Activated CD8-positive, alpha-beta memory T cell treated with anti-CD3 and anti-CD28 coated beads, Interleukin-2, amount 10 ng/mL, durations not matched to agents 7 days and 5 days (primary cell): ENCODE measurements at regions of chr7 and their contacts with region 1.

Region 1: DNA sequence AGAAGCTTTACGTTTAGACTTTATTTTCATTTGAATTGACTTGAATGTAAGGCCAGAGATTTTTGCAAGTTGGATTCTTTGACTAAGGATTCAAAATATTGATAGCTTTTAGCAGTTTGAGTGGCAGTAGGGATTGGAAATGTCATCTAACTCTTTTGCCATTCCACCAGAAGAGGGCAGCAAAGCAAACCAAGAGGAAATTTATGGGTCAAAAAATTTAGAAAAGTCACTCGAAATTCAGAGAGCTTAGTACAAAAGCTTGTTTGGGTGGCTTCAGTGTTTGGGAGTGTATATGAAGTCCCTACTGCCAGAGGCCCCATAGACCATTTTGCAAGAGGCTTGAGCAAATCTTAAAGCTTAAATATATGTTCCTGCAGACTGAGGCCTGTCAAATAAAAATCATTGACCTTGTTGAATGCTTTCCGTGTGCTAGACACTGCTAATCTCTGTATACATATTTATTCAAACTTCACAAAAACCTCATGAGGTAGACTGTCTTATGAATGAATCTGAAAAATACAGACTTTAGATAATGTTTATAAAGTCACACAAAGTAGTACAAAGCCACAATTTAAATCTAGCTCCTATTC is 44.6 kb upstream of the RSBN1L start:
- DNase-seq: no peak
- ATAC-seq: no peak
- H3K4me3 Mint-ChIP-seq: no peak overlapping the region
- H3K27ac Mint-ChIP-seq: no peak overlapping the region
- H3K4me1 Mint-ChIP-seq: no peaks in the 10 kb centered on the region
- H3K27me3 Mint-ChIP-seq: no peaks in the 10 kb centered on the region

Region 2: GRCh38 chr7:77455324-77455723 is 196.3 kb before region 1 on chr7:
- CTCF ChIA-PET with region 1: no interaction called
- DNase-seq: no peak
- ATAC-seq: no peak
- H3K4me3 Mint-ChIP-seq: no peak overlapping the region
- H3K27ac Mint-ChIP-seq: no peak overlapping the region
- H3K4me1 Mint-ChIP-seq: peaks cover 2% of the 10 kb centered on the region
- H3K27me3 Mint-ChIP-seq: peaks cover 7% of the 10 kb centered on the region

Region 3: GRCh38 chr7:77580762-77581350 is 70.8 kb before region 1 on chr7:
- CTCF ChIA-PET with region 1: no interaction called
- DNase-seq: no peak
- ATAC-seq: no peak
- H3K4me3 Mint-ChIP-seq: no peak overlapping the region
- H3K27ac Mint-ChIP-seq: no peak overlapping the region
- H3K4me1 Mint-ChIP-seq: no peaks in the 10 kb centered on the region
- H3K27me3 Mint-ChIP-seq: no peaks in the 10 kb centered on the region

Region 4: DNA sequence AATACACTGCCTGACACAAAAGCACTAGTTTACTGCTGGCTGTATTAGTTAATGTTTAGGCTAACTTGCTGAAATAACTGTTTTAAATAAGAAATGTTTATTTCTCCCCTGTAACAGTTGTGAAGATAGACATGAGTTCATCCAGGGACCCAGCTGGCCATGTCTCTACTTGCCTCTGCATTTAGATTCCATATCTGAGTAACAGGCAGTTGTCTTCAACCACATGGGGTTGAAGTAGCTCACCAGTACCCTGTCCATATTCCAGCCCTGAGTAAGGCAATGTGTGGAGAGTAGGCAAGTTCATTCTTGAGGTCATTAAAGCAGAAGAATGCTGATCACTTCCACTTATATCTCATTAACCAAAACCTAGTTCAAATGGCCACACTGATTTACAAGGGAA is 13.5 kb after region 1 on chr7:
- CTCF ChIA-PET with region 1: interaction called, 10 read pairs
- DNase-seq: no peak
- ATAC-seq: no peak
- H3K4me3 Mint-ChIP-seq: no peak overlapping the region
- H3K27ac Mint-ChIP-seq: no peak overlapping the region
- H3K4me1 Mint-ChIP-seq: no peaks in the 10 kb centered on the region
- H3K27me3 Mint-ChIP-seq: no peaks in the 10 kb centered on the region

Region 5: GRCh38 chr7:77674878-77675277 is 23.2 kb after region 1 on chr7:
- CTCF ChIA-PET with region 1: interaction called, 15 read pairs
- DNase-seq: no peak
- ATAC-seq: peak; percentile 49
- H3K4me3 Mint-ChIP-seq: no peak overlapping the region
- H3K27ac Mint-ChIP-seq: no peak overlapping the region
- H3K4me1 Mint-ChIP-seq: peaks cover 4% of the 10 kb centered on the region
- H3K27me3 Mint-ChIP-seq: no peaks in the 10 kb centered on the region

Region 6: GRCh38 chr7:77759294-77759889 is 107.7 kb after region 1 on chr7:
- CTCF ChIA-PET with region 1: interaction called, 51 read pairs
- DNase-seq: peak; percentile 74
- ATAC-seq: peak; percentile 58
- H3K4me3 Mint-ChIP-seq: no peak overlapping the region
- H3K27ac Mint-ChIP-seq: no peak overlapping the region
- H3K4me1 Mint-ChIP-seq: peaks cover 20% of the 10 kb centered on the region
- H3K27me3 Mint-ChIP-seq: no peaks in the 10 kb centered on the region

Region 7: DNA sequence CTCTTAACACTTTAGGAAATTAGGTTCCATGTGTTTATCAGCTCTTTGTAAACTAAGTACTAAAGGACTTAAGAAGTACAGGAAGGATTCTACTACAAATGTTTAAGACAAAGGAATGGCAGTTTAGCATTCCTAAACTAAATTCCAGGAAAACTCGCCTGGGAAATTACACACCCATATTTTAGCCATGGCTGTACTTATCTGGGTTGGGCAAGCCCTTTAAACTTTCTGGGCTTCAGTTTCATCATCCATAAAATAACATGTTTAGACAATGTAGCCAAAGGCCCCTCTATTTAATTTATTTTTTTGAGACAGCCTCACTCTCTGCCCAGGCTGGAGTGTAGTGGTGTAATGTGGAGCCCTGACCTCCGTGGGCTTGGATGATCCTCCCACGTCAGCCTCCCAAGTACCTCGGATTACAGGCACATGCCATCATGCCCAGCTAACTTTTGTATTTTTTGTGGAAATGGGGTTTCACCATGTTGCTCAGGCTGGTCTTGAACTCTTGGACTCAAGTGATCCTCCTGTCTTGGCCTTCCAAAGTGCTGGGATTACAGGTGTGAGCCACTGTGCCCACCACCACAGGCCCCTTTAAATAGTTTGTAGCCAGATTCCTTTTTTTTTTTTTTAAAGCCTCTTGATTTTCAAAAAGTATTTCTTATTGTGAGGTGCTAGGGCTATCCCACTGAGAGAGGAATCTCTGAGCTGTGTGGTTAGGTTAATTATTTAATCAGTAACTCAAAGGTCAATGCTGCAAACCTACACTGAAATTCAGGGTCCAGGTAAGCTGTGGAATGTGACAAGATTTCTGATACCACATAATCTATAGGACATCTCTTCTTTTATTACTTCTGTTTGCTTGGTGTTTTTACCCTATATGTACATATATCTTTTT is 114.5 kb after region 1 on chr7:
- CTCF ChIA-PET with region 1: interaction called, 51 read pairs
- DNase-seq: no peak
- ATAC-seq: no peak
- H3K4me3 Mint-ChIP-seq: no peak overlapping the region
- H3K27ac Mint-ChIP-seq: no peak overlapping the region
- H3K4me1 Mint-ChIP-seq: peaks cover 4% of the 10 kb centered on the region
- H3K27me3 Mint-ChIP-seq: no peaks in the 10 kb centered on the region

Region 8: GRCh38 chr7:78020136-78020873 is 368.6 kb after region 1 on chr7:
- CTCF ChIA-PET with region 1: interaction called, 11 read pairs
- DNase-seq: peak; percentile 56
- ATAC-seq: peak; percentile 47
- H3K4me3 Mint-ChIP-seq: peak overlapping the region; percentile 63
- H3K27ac Mint-ChIP-seq: peak overlapping the region; percentile 37
- H3K4me1 Mint-ChIP-seq: peaks cover 17% of the 10 kb centered on the region
- H3K27me3 Mint-ChIP-seq: peaks cover 45% of the 10 kb centered on the region

Region 9: DNA sequence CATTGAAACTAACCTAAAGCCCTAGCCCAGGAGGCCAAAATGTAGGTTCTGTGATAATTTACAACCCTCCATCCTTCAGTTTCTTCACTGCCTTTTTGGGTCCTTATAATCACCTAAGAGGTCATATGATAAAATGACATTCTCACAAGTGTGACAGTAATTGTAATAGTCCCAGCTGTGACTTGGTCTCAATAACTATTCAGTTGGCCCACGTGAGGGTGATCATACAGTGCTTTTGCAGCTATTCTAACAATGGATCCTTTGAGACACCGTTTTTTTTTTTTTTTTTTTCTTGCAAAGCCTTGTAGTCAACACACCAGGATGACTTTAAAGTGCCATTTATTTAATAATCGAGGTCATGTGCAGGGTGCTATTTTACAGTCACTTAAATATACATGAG is 906.9 kb after region 1 on chr7:
- CTCF ChIA-PET with region 1: no interaction called
- DNase-seq: no peak
- ATAC-seq: no peak
- H3K4me3 Mint-ChIP-seq: no peak overlapping the region
- H3K27ac Mint-ChIP-seq: no peak overlapping the region
- H3K4me1 Mint-ChIP-seq: no peaks in the 10 kb centered on the region
- H3K27me3 Mint-ChIP-seq: no peaks in the 10 kb centered on the region